GM12878 (cell line): ENCODE measurements at regions of chr1 and their contacts with region 1.

Region 1: GRCh38 chr1:182391362-182392044 is at the start of gene GLUL:
- DNase-seq: no peak
- ATAC-seq: peak; percentile 86
- H3K4me3 ChIP-seq: peak within 1 kb of the TSS; percentile 85
- H3K27ac ChIP-seq: peak within 1 kb of the TSS; percentile 71
- H3K4me1 ChIP-seq: peaks cover 11% of the 10 kb centered on the region
- H3K27me3 ChIP-seq: no peaks in the 10 kb centered on the region
- CTCF ChIP-seq: peak in 1 of 3 experiments; percentile 36; a peak in 1 of 6 replicates
- EP300 ChIP-seq: no peak
- POLR2A ChIP-seq: peak; percentile 98
- RAD21 ChIP-seq: no peak
- polyA plus RNA-seq, gene GLUL: 166 to 392 TPM

Region 2: GRCh38 chr1:182084487-182085316 is 306.8 kb before region 1 on chr1:
- CTCF ChIA-PET with region 1: interaction called, 64 read pairs
- POLR2A ChIA-PET with region 1: no interaction called
- RAD21 ChIA-PET with region 1: interaction called, 17 read pairs
- SMC1A ChIA-PET with region 1: interaction called, 22 read pairs
- in situ Hi-C with region 1: loop called (anchors 5 kb)
- intact Hi-C with region 1: loop called (anchors 1 kb)
- DNase-seq: no peak
- ATAC-seq: peak; percentile 94
- H3K4me3 ChIP-seq: no peak overlapping the region
- H3K27ac ChIP-seq: no peak overlapping the region
- H3K4me1 ChIP-seq: no peaks in the 10 kb centered on the region
- H3K27me3 ChIP-seq: no peaks in the 10 kb centered on the region
- CTCF ChIP-seq: peak; percentile 67 to 75 (median 74)
- EP300 ChIP-seq: no peak
- POLR2A ChIP-seq: no peak
- RAD21 ChIP-seq: peak; percentile 89

Region 3: GRCh38 chr1:182317611-182318161 is 73.8 kb before region 1 on chr1:
- CTCF ChIA-PET with region 1: interaction called, 33 read pairs
- POLR2A ChIA-PET with region 1: no interaction called
- RAD21 ChIA-PET with region 1: interaction called, 30 read pairs
- SMC1A ChIA-PET with region 1: interaction called, 24 read pairs
- in situ Hi-C with region 1: no loop called
- intact Hi-C with region 1: loop called (anchors 5 kb)
- DNase-seq: no peak
- ATAC-seq: no peak
- H3K4me3 ChIP-seq: no peak overlapping the region
- H3K27ac ChIP-seq: no peak overlapping the region
- H3K4me1 ChIP-seq: no peaks in the 10 kb centered on the region
- H3K27me3 ChIP-seq: no peaks in the 10 kb centered on the region
- CTCF ChIP-seq: no peak
- EP300 ChIP-seq: no peak
- POLR2A ChIP-seq: no peak
- RAD21 ChIP-seq: no peak

Region 4: GRCh38 chr1:182633672-182634176 is 242.2 kb after region 1 on chr1:
- CTCF ChIA-PET with region 1: no interaction called
- POLR2A ChIA-PET with region 1: no interaction called
- RAD21 ChIA-PET with region 1: no interaction called
- SMC1A ChIA-PET with region 1: no interaction called
- in situ Hi-C with region 1: no loop called
- intact Hi-C with region 1: no loop called
- DNase-seq: no peak
- ATAC-seq: no peak
- H3K4me3 ChIP-seq: no peak overlapping the region
- H3K27ac ChIP-seq: no peak overlapping the region
- H3K4me1 ChIP-seq: peaks cover 33% of the 10 kb centered on the region
- H3K27me3 ChIP-seq: no peaks in the 10 kb centered on the region
- CTCF ChIP-seq: no peak
- EP300 ChIP-seq: no peak
- POLR2A ChIP-seq: no peak
- RAD21 ChIP-seq: no peak